Activated CD4-positive, alpha-beta T cell treated with anti-CD3 and anti-CD28 coated beads for 36 hours (primary cell): ENCODE measurements at regions of chr13 and their contacts with region 1.

Region 1: GRCh38 chr13:110715395-110716235 is 2.1 kb downstream of the ING1 start:
- DNase-seq: peak; percentile 98
- ATAC-seq: peak; percentile 67
- H3K4me3 Mint-ChIP-seq: peak overlapping the region; percentile 87
- H3K27ac Mint-ChIP-seq: peak overlapping the region; percentile 97
- H3K4me1 Mint-ChIP-seq: peaks cover 29% of the 10 kb centered on the region
- H3K27me3 Mint-ChIP-seq: no peaks in the 10 kb centered on the region

Region 2: GRCh38 chr13:110150384-110151101 is 565.1 kb before region 1 on chr13:
- CTCF ChIA-PET with region 1: no interaction called
- POLR2A ChIA-PET with region 1: no interaction called
- intact Hi-C with region 1: no loop called
- DNase-seq: no peak
- ATAC-seq: no peak
- H3K4me3 Mint-ChIP-seq: no peak overlapping the region
- H3K27ac Mint-ChIP-seq: no peak overlapping the region
- H3K4me1 Mint-ChIP-seq: no peaks in the 10 kb centered on the region
- H3K27me3 Mint-ChIP-seq: no peaks in the 10 kb centered on the region

Region 3: GRCh38 chr13:110593430-110594130 is 122.0 kb before region 1 on chr13:
- CTCF ChIA-PET with region 1: no interaction called
- POLR2A ChIA-PET with region 1: interaction called, 12 read pairs
- intact Hi-C with region 1: no loop called
- DNase-seq: peak; percentile 23
- ATAC-seq: peak; percentile 76
- H3K4me3 Mint-ChIP-seq: no peak overlapping the region
- H3K27ac Mint-ChIP-seq: no peak overlapping the region
- H3K4me1 Mint-ChIP-seq: no peaks in the 10 kb centered on the region
- H3K27me3 Mint-ChIP-seq: no peaks in the 10 kb centered on the region

Region 4: DNA sequence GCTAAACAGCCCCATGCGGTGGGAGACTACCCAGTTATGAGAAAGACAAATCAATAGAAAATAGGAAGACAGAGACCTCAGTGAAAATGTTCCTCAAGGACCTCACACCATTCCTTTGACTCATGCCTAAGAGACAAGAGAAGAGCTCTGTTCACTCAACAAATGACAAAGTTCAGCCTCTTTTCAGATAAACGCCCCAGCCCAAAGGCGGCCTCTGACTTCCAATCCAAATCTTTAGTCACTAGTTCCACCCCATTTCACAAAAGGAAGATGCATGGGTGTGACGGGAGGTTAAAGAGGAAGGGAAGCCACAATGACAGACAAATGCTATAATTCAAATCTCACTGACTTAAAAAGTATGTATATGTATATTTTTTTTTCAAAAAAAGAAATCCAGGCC is 17.8 kb before region 1 on chr13:
- CTCF ChIA-PET with region 1: no interaction called
- POLR2A ChIA-PET with region 1: no interaction called
- intact Hi-C with region 1: no loop called
- DNase-seq: no peak
- ATAC-seq: no peak
- H3K4me3 Mint-ChIP-seq: no peak overlapping the region
- H3K27ac Mint-ChIP-seq: no peak overlapping the region
- H3K4me1 Mint-ChIP-seq: peaks cover 34% of the 10 kb centered on the region
- H3K27me3 Mint-ChIP-seq: no peaks in the 10 kb centered on the region

Region 5: GRCh38 chr13:110726726-110727125 is 11.1 kb after region 1 on chr13:
- CTCF ChIA-PET with region 1: no interaction called
- POLR2A ChIA-PET with region 1: no interaction called
- intact Hi-C with region 1: loop called (anchors 1 kb)
- DNase-seq: peak; percentile 84
- ATAC-seq: peak; percentile 96
- H3K4me3 Mint-ChIP-seq: peak overlapping the region; percentile 19
- H3K27ac Mint-ChIP-seq: peak overlapping the region; percentile 64
- H3K4me1 Mint-ChIP-seq: peaks cover 27% of the 10 kb centered on the region
- H3K27me3 Mint-ChIP-seq: no peaks in the 10 kb centered on the region

Region 6: GRCh38 chr13:110915057-110915873 is 199.7 kb after region 1 on chr13 and contains the start of gene ANKRD10:
- CTCF ChIA-PET with region 1: no interaction called
- POLR2A ChIA-PET with region 1: interaction called, 15 read pairs
- intact Hi-C with region 1: loop called (anchors 1 kb)
- DNase-seq: peak; percentile 98
- ATAC-seq: peak; percentile 84
- H3K4me3 Mint-ChIP-seq: peak within 1 kb of the TSS; percentile 92
- H3K27ac Mint-ChIP-seq: peak within 1 kb of the TSS; percentile 93
- H3K4me1 Mint-ChIP-seq: peaks cover 39% of the 10 kb centered on the region
- H3K27me3 Mint-ChIP-seq: no peaks in the 10 kb centered on the region
- total RNA-seq, gene ANKRD10: 65.1 to 91.8 TPM

Region 7: DNA sequence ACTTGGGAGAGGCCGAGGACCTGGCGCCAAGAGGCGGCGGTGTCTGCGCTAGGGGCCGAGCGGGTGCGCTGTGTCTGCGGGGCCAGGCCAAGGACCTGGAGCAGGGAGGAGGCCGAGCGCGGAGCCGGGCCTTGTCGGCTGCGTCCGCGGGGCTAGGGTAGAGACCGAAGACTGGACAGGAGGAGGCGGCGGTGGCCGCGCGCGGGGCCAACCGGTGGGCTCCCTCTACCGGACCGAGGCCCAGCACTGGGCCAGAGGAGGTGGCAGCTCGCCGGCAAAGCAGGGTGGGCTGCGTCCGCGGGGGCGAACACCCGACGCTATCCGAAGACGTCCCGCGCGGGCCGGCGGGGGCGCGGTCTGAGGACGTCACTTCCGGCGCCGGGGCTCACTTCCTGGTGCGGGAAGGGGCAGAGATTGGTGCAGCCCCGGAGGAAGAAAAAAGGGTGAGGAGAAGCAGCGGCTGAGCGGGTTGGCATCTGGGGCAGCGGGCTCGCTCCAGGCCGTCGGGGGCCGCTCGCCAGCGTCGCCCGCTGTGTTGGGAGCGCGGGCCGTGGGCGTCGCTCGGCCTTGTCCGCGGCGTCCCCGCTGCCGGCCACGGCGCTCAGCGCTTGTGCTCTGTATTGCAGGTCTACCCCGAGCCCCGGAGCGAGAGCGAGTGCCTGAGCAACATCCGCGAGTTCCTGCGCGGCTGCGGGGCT is 437.8 kb after region 1 on chr13:
- CTCF ChIA-PET with region 1: no interaction called
- POLR2A ChIA-PET with region 1: no interaction called
- intact Hi-C with region 1: loop called (anchors 1 to 10 kb)
- DNase-seq: peak; percentile 96
- ATAC-seq: peak; percentile 89
- H3K4me3 Mint-ChIP-seq: peak overlapping the region; percentile 83
- H3K27ac Mint-ChIP-seq: peak overlapping the region; percentile 90
- H3K4me1 Mint-ChIP-seq: peaks cover 33% of the 10 kb centered on the region
- H3K27me3 Mint-ChIP-seq: no peaks in the 10 kb centered on the region

Region 8: GRCh38 chr13:112587212-112587763 is 1871.7 kb after region 1 on chr13:
- CTCF ChIA-PET with region 1: no interaction called
- POLR2A ChIA-PET with region 1: no interaction called
- intact Hi-C with region 1: loop called in 1 of 2 experiments (anchors 2 kb)
- DNase-seq: peak; percentile 84
- ATAC-seq: peak; percentile 79
- H3K4me3 Mint-ChIP-seq: peak overlapping the region; percentile 96
- H3K27ac Mint-ChIP-seq: peak overlapping the region; percentile 97
- H3K4me1 Mint-ChIP-seq: peaks cover 46% of the 10 kb centered on the region
- H3K27me3 Mint-ChIP-seq: no peaks in the 10 kb centered on the region